ENCODE measurements at regions of chr11 and their contacts with region 1.

Region 1: DNA sequence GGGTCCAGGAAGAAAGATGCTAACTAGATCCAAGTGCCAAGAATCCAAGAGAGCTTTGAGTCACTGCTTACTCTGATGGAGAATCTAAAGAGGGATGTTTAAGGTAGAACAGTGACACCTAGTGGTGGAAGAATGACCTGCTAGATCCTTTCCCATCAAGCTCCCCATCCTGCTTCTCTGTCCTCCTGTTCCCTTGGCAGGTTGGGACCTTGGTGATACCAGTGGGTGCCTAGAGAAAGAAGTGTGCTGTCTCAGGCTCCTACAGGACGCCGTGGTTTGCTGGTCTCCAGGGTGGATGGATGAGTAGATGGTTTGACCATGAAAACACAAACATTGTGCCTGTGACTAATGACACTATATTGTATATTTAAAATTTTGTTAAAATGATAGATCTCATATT is 383.7 kb downstream of the TMEM135 start:
- DNase-seq: no peak
- H3K4me3 ChIP-seq: no peak overlapping the region
- H3K27ac ChIP-seq: no peak overlapping the region
- H3K4me1 ChIP-seq: no peaks in the 10 kb centered on the region
- H3K27me3 ChIP-seq: no peaks in the 10 kb centered on the region
- CTCF ChIP-seq: peak; percentile 61 to 79 (median 69)
- POLR2A ChIP-seq: no peak

Region 2: DNA sequence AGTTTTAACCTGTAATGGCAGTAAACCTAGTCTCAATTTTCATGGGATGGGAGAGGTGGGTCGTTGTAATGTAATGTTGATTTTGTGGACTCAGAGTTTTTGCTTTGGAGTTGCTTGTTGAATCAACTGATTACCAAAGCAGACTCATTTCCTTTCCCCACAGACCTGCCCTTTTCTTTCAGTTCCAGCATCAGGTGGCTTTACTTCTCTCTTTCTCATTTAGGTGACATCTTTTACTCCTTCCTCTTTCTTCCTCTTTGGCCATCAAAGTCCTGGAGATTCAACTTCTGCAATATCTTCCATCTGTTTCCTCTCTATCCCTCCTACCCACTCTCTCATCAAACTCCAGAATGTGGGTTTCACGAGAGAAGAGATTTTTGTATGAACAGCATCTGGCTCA is 69.7 kb before region 1 on chr11:
- intact Hi-C with region 1: loop called (anchors 2 kb)
- DNase-seq: peak in 1 of 2 donors; percentile 22
- H3K4me3 ChIP-seq: no peak overlapping the region
- H3K27ac ChIP-seq: no peak overlapping the region
- H3K4me1 ChIP-seq: peaks cover 19% of the 10 kb centered on the region
- H3K27me3 ChIP-seq: no peaks in the 10 kb centered on the region
- CTCF ChIP-seq: no peak
- POLR2A ChIP-seq: no peak

Region 3: DNA sequence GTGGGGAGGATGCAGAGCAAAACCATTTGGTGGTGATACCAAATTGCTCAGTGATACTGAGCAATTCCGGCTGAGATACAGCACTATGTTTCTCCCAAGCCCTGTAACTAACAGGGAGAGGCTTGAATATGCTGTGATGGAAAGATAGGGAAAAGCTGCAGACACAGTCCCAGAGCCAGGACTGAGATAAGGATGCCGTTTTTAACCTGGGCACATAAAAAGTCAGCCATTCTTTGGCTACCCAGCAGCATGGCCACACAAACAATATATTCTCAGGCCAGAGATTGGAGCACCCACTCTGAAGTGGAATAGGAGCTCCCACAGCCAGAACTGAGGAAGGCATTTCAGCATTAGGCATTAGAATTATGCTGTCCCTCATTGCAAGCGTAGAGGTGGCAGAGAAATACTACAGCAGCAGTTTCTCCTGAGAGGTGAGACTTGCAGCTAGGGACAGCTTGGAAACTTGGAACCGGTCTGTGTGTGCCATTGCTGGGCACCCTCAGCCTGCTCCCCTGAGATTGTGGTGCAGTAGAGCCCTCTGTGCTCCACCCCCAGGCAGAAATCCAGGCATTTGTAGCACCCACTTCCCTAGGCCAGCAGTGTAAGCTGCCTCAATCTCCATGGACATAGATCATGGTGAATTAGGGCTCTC is 37.2 kb before region 1 on chr11:
- intact Hi-C with region 1: no loop called
- DNase-seq: no peak
- H3K4me3 ChIP-seq: no peak overlapping the region
- H3K27ac ChIP-seq: no peak overlapping the region
- H3K4me1 ChIP-seq: no peaks in the 10 kb centered on the region
- H3K27me3 ChIP-seq: no peaks in the 10 kb centered on the region
- CTCF ChIP-seq: no peak
- POLR2A ChIP-seq: no peak